ENCODE measurements at regions of chr2 and their contacts with region 1.

Region 1: GRCh38 chr2:203871371-203871983 is 3.9 kb downstream of the CTLA4 start:
- DNase-seq: no peak
- H3K4me3 ChIP-seq: peak overlapping the region; percentile 17 to 54
- H3K4me3 Mint-ChIP-seq: peak overlapping the region; percentile 85 to 95 (median 90)
- H3K27ac ChIP-seq: peak overlapping the region; percentile 59
- H3K27ac Mint-ChIP-seq: peak overlapping the region; percentile 41 to 89 (median 81)
- H3K4me1 ChIP-seq: peaks cover 84% of the 10 kb centered on the region
- H3K4me1 Mint-ChIP-seq: peaks cover 58 to 87% (median 74%) of the 10 kb centered on the region in 4 donors
- H3K27me3 ChIP-seq: no peaks in the 10 kb centered on the region
- H3K27me3 Mint-ChIP-seq: no peaks in the 10 kb centered on the region

Region 2: DNA sequence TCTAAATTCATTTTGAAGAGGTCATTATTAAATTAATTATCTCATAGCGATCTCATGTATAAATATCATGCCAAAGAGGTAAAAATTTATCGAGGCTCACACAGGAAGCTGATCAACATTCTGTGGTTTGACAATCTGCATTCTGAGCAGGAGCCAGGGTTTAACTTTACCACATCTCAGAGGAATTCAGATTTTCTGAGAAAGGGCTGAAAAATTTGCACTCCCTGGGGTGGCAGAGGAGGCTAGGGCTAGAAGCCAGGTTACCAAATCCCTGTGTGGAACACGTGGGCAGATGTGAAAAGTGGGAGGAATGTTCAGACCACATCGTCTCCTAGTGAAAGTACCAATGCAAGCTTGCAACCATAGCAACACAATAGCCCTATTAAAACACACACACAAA is 67.4 kb before region 1 on chr2:
- CTCF ChIA-PET with region 1: no interaction called
- POLR2A ChIA-PET with region 1: interaction called, 5 read pairs
- intact Hi-C with region 1: loop called (anchors 2 kb)
- DNase-seq: peak; percentile 36 to 57 (median 50)
- H3K4me3 ChIP-seq: no peak overlapping the region
- H3K4me3 Mint-ChIP-seq: peak overlapping the region; percentile 4 to 81 (median 70)
- H3K27ac ChIP-seq: no peak overlapping the region
- H3K27ac Mint-ChIP-seq: peak overlapping the region; percentile 25 to 95 (median 87)
- H3K4me1 ChIP-seq: peaks cover 51% of the 10 kb centered on the region
- H3K4me1 Mint-ChIP-seq: peaks cover 39 to 73% (median 62%) of the 10 kb centered on the region in 4 donors
- H3K27me3 ChIP-seq: no peaks in the 10 kb centered on the region
- H3K27me3 Mint-ChIP-seq: no peaks in the 10 kb centered on the region

Region 3: GRCh38 chr2:203830304-203831055 is 41.0 kb before region 1 on chr2:
- CTCF ChIA-PET with region 1: no interaction called
- POLR2A ChIA-PET with region 1: interaction called, 4 read pairs
- intact Hi-C with region 1: loop called (anchors 5 kb)
- DNase-seq: no peak
- H3K4me3 ChIP-seq: no peak overlapping the region
- H3K4me3 Mint-ChIP-seq: peak overlapping the region in 7 of 8 donors; percentile 2 to 45 (median 17)
- H3K27ac ChIP-seq: no peak overlapping the region
- H3K27ac Mint-ChIP-seq: peak overlapping the region in 5 of 7 donors; percentile 7 to 68 (median 57)
- H3K4me1 ChIP-seq: peaks cover 13% of the 10 kb centered on the region
- H3K4me1 Mint-ChIP-seq: peaks cover 8 to 13% (median 11%) of the 10 kb centered on the region in 4 donors
- H3K27me3 ChIP-seq: no peaks in the 10 kb centered on the region
- H3K27me3 Mint-ChIP-seq: no peaks in the 10 kb centered on the region

Region 4: DNA sequence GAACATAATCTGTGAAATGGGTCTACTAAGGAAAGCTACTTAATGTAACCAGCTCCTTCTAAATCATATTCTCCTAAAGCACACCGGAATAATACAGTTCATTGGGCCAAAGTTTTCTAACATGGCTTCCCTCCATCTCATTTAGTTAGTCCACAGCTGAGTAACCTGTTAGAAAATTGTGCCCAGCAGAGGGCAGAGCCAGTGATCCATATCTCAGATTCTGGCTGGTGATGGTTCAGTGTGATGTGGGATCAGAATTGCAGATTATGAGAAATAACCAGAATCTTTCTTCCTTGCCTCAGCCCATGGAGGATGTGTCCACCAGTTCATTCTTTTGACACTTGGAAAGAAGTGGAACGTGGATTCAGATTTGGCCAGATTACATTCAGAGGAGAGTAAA is 13.3 kb before region 1 on chr2:
- CTCF ChIA-PET with region 1: interaction called, 58 read pairs
- POLR2A ChIA-PET with region 1: interaction called, 213 read pairs
- intact Hi-C with region 1: loop called (anchors 2 kb)
- DNase-seq: peak in 1 of 5 donors; percentile 38
- H3K4me3 ChIP-seq: no peak overlapping the region
- H3K4me3 Mint-ChIP-seq: peak overlapping the region in 4 of 8 donors; percentile 2 to 47 (median 22)
- H3K27ac ChIP-seq: no peak overlapping the region
- H3K27ac Mint-ChIP-seq: peak overlapping the region in 5 of 7 donors; percentile 6 to 57 (median 36)
- H3K4me1 ChIP-seq: peaks cover 71% of the 10 kb centered on the region
- H3K4me1 Mint-ChIP-seq: peaks cover 49 to 75% (median 52%) of the 10 kb centered on the region in 4 donors
- H3K27me3 ChIP-seq: no peaks in the 10 kb centered on the region
- H3K27me3 Mint-ChIP-seq: no peaks in the 10 kb centered on the region

Region 5: DNA sequence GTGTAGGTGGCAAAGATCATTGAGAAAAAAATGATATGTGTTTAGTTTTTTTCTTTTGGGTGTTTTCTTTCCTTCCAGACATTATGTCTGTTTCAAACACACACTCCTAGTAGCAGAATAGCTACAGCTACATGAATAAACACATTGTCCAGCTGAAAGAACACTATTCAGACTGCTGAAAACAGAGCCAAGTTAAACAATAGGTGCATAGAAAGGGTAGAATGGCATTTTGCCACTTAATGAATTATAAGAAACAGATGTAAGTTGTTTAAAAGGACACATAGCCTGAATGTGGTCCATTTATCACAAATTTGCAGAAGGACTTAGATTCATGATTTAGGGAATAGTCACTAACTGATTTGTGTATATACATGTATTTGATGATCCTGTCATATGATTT is 16.2 kb after region 1 on chr2:
- CTCF ChIA-PET with region 1: no interaction called
- POLR2A ChIA-PET with region 1: interaction called, 60 read pairs
- intact Hi-C with region 1: no loop called
- DNase-seq: no peak
- H3K4me3 ChIP-seq: no peak overlapping the region
- H3K4me3 Mint-ChIP-seq: no peak overlapping the region
- H3K27ac ChIP-seq: no peak overlapping the region
- H3K27ac Mint-ChIP-seq: peak overlapping the region in 1 of 7 donors; percentile 31
- H3K4me1 ChIP-seq: peaks cover 13% of the 10 kb centered on the region
- H3K4me1 Mint-ChIP-seq: peaks cover 2 to 13% (median 9%) of the 10 kb centered on the region in 4 donors
- H3K27me3 ChIP-seq: no peaks in the 10 kb centered on the region
- H3K27me3 Mint-ChIP-seq: no peaks in the 10 kb centered on the region